ENCODE measurements at regions of chr5 and their contacts with region 1.

Region 1: GRCh38 chr5:75260708-75261107 is 24.0 kb upstream of the ANKRD31 start:
- DNase-seq: peak; percentile 58 to 65
- H3K4me3 ChIP-seq: no peak overlapping the region
- H3K4me3 Mint-ChIP-seq: peak overlapping the region; percentile 6
- H3K27ac Mint-ChIP-seq: no peak overlapping the region
- H3K4me1 ChIP-seq: peaks cover 26% of the 10 kb centered on the region
- H3K4me1 Mint-ChIP-seq: peaks cover 17% of the 10 kb centered on the region
- H3K27me3 ChIP-seq: no peaks in the 10 kb centered on the region
- H3K27me3 Mint-ChIP-seq: no peaks in the 10 kb centered on the region
- CTCF ChIP-seq: no peak

Region 2: GRCh38 chr5:75236322-75237316 is 24.1 kb before region 1 on chr5 and contains the start of gene ANKRD31:
- CTCF ChIA-PET with region 1: interaction called, 21 read pairs
- POLR2A ChIA-PET with region 1: interaction called, 7 read pairs
- intact Hi-C with region 1: loop called (anchors 1 kb)
- DNase-seq: peak; percentile 72 to 90
- H3K4me3 ChIP-seq: peak within 1 kb of the TSS; percentile 91
- H3K4me3 Mint-ChIP-seq: peak within 1 kb of the TSS; percentile 80
- H3K27ac Mint-ChIP-seq: peak within 1 kb of the TSS; percentile 82
- H3K4me1 ChIP-seq: peaks cover 24% of the 10 kb centered on the region
- H3K4me1 Mint-ChIP-seq: peaks cover 8% of the 10 kb centered on the region
- H3K27me3 ChIP-seq: no peaks in the 10 kb centered on the region
- H3K27me3 Mint-ChIP-seq: no peaks in the 10 kb centered on the region
- CTCF ChIP-seq: peak; percentile 38 to 86
- total RNA-seq, gene ANKRD31: 0.66 and 0.79 TPM in 2 replicates